CD4-positive, alpha-beta memory T cell (primary cell): ENCODE measurements at regions of chr12 and their contacts with region 1.

Region 1: GRCh38 chr12:68807576-68808387 is at the start of gene MDM2:
- DNase-seq: peak; percentile 97 to 99 (median 99)
- H3K4me3 ChIP-seq: peak within 1 kb of the TSS; percentile 42 to 94
- H3K4me3 Mint-ChIP-seq: peak within 1 kb of the TSS; percentile 95 to 97 (median 96)
- H3K27ac ChIP-seq: peak within 1 kb of the TSS; percentile 92
- H3K27ac Mint-ChIP-seq: peak within 1 kb of the TSS; percentile 98 to 99 (median 99)
- H3K4me1 ChIP-seq: peaks cover 28% of the 10 kb centered on the region
- H3K4me1 Mint-ChIP-seq: peaks cover 9 to 33% (median 22%) of the 10 kb centered on the region in 4 donors
- H3K27me3 ChIP-seq: no peaks in the 10 kb centered on the region
- H3K27me3 Mint-ChIP-seq: no peaks in the 10 kb centered on the region
- total RNA-seq, gene MDM2: 117 to 121 TPM

Region 2: GRCh38 chr12:68364893-68365725 is 442.7 kb before region 1 on chr12:
- CTCF ChIA-PET with region 1: no interaction called
- POLR2A ChIA-PET with region 1: interaction called, 12 read pairs
- intact Hi-C with region 1: loop called (anchors 1 kb)
- DNase-seq: peak; percentile 82 to 91 (median 88)
- H3K4me3 ChIP-seq: peak overlapping the region in 1 of 2 donors; percentile 51
- H3K4me3 Mint-ChIP-seq: peak overlapping the region; percentile 77 to 92 (median 84)
- H3K27ac ChIP-seq: peak overlapping the region; percentile 76
- H3K27ac Mint-ChIP-seq: peak overlapping the region; percentile 91 to 97 (median 96)
- H3K4me1 ChIP-seq: peaks cover 59% of the 10 kb centered on the region
- H3K4me1 Mint-ChIP-seq: peaks cover 54 to 81% (median 60%) of the 10 kb centered on the region in 4 donors
- H3K27me3 ChIP-seq: no peaks in the 10 kb centered on the region
- H3K27me3 Mint-ChIP-seq: no peaks in the 10 kb centered on the region

Region 3: DNA sequence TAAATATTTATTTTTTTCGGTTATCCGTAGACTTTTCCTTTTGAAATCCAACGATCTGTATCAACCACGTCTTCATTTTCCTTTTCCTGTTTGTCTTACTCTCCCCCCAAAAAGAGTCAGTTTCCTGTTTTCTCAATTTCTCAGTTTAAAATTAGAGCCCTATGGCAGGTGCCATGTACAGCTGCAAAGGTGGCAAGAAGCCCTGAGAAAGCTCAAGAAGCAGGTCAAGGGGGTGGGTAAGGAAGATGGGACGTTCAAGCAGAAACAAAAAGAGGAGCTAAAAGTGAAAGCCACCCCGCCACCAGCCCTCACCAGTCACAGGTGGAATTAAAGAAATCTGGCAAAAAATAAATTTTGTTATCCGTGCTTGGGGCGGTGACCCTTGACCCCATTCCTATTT is 35.1 kb before region 1 on chr12:
- CTCF ChIA-PET with region 1: interaction called, 4 read pairs
- POLR2A ChIA-PET with region 1: interaction called, 10 read pairs
- intact Hi-C with region 1: no loop called
- DNase-seq: no peak
- H3K4me3 ChIP-seq: no peak overlapping the region
- H3K4me3 Mint-ChIP-seq: peak overlapping the region in 5 of 8 donors; percentile 5 to 70 (median 67)
- H3K27ac ChIP-seq: no peak overlapping the region
- H3K27ac Mint-ChIP-seq: peak overlapping the region in 5 of 7 donors; percentile 31 to 89 (median 71)
- H3K4me1 ChIP-seq: peaks cover 12% of the 10 kb centered on the region
- H3K4me1 Mint-ChIP-seq: peaks cover 9 to 14% (median 12%) of the 10 kb centered on the region in 4 donors
- H3K27me3 ChIP-seq: no peaks in the 10 kb centered on the region
- H3K27me3 Mint-ChIP-seq: no peaks in the 10 kb centered on the region

Region 4: DNA sequence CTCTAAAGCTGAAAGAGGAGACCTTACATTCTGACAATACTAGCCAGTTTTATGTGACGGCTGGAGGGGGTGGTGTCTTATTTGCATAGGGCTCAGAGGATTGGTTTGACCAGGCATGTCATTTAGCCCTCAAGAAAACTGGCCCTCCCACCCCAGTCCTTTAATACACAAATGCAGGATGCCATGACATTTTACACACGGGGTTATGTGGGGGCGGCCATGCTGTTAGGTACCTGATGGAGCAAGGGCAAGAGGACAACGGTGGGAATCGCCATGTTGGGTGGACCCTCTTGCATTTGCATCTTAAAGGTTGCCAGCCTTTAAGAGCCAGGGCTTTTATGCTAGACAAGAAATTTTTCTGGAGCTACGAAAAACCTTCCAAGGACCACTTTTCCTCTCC is 23.5 kb after region 1 on chr12:
- CTCF ChIA-PET with region 1: interaction called, 29 read pairs
- POLR2A ChIA-PET with region 1: interaction called, 21 read pairs
- intact Hi-C with region 1: no loop called
- DNase-seq: no peak
- H3K4me3 ChIP-seq: no peak overlapping the region
- H3K4me3 Mint-ChIP-seq: no peak overlapping the region
- H3K27ac ChIP-seq: no peak overlapping the region
- H3K27ac Mint-ChIP-seq: peak overlapping the region in 1 of 7 donors; percentile 69
- H3K4me1 ChIP-seq: peaks cover 4% of the 10 kb centered on the region
- H3K4me1 Mint-ChIP-seq: peaks cover 5 to 13% (median 6%) of the 10 kb centered on the region in 4 donors
- H3K27me3 ChIP-seq: no peaks in the 10 kb centered on the region
- H3K27me3 Mint-ChIP-seq: no peaks in the 10 kb centered on the region

Region 5: GRCh38 chr12:69211160-69211559 is 403.4 kb after region 1 on chr12:
- CTCF ChIA-PET with region 1: no interaction called
- POLR2A ChIA-PET with region 1: no interaction called
- intact Hi-C with region 1: no loop called
- DNase-seq: no peak
- H3K4me3 ChIP-seq: no peak overlapping the region
- H3K4me3 Mint-ChIP-seq: no peak overlapping the region
- H3K27ac ChIP-seq: no peak overlapping the region
- H3K27ac Mint-ChIP-seq: no peak overlapping the region
- H3K4me1 ChIP-seq: no peaks in the 10 kb centered on the region
- H3K4me1 Mint-ChIP-seq: no peaks in the 10 kb centered on the region
- H3K27me3 ChIP-seq: no peaks in the 10 kb centered on the region
- H3K27me3 Mint-ChIP-seq: peaks cover 0 to 1% of the 10 kb centered on the region in 2 donors